SK-N-SH (cell line): ENCODE measurements at regions of chr10 and their contacts with region 1.

Region 1: GRCh38 chr10:50367732-50368131 is 116.4 kb upstream of the ASAH2 start:
- DNase-seq: peak; percentile 33
- H3K4me3 ChIP-seq: no peak overlapping the region
- H3K27ac ChIP-seq: no peak overlapping the region
- H3K4me1 ChIP-seq: no peaks in the 10 kb centered on the region
- H3K27me3 ChIP-seq: no peaks in the 10 kb centered on the region
- CTCF ChIP-seq: peak; percentile 57
- EP300 ChIP-seq: no peak
- RAD21 ChIP-seq: peak; percentile 66

Region 2: DNA sequence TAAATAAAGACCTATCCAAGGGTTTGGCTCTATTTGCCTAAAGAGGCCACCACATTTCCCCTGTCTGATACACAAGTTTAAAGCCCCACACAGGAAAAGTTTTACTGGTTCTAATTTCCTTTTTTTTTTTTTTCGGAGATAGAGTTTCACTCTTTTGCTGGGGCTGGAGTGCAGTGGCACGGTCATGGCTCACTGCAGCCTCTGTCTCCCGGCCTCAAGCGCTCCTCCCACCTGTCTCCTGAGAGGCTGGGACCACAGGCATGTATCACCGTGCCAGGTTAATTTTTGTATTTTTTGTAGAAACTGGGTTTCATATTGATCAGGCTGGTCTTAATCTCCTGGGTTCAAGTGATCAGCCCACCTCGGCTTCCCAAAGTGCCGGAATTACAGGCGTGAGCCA is 63.1 kb before region 1 on chr10:
- CTCF ChIA-PET with region 1: no interaction called
- POLR2A ChIA-PET with region 1: no interaction called
- DNase-seq: no peak
- H3K4me3 ChIP-seq: no peak overlapping the region
- H3K27ac ChIP-seq: no peak overlapping the region
- H3K4me1 ChIP-seq: no peaks in the 10 kb centered on the region
- H3K27me3 ChIP-seq: no peaks in the 10 kb centered on the region
- CTCF ChIP-seq: no peak
- EP300 ChIP-seq: no peak
- RAD21 ChIP-seq: no peak

Region 3: DNA sequence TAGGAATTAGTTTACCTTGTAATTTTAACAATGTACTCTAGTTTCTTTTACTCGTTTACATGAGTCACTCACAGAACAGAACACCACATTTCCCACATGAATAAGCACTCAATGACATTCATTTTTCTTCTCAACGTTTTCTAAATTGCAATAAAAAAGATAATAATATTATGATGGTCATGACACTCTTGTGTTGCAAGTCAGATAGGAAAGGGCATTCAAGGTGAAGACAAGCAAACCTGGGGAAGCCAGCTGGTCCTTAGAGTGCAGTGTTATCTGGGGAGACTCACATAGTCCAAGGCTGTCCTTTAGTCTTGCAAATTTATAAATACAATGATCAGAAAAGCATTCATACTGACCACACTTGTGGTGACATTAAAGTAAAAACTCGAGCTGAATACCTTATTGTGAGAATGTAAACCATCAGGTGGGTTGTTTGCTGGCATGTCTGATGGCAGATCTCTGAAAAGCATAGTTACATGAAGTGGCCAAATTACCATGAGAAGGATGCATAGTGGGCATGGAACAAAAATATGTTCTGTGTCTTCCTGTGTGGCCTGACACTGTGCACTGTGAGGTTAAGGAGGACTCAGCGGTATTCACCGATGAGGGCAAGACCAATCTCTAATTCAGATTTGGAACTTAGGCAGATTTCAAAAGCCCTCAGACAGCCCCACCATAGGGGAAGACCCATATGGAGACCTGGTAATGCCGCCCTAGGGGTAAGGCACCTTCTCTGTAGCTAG is 42.5 kb after region 1 on chr10:
- CTCF ChIA-PET with region 1: interaction called, 10 read pairs
- POLR2A ChIA-PET with region 1: no interaction called
- DNase-seq: no peak
- H3K4me3 ChIP-seq: no peak overlapping the region
- H3K27ac ChIP-seq: 0 out of 4 replicates have a peak overlapping the region, but pooled peaks of 1 of the 2 experiments have one; percentile 0
- H3K4me1 ChIP-seq: peaks cover 4 to 5% of the 10 kb centered on the region in 2 experiments; a peak in 1 of 4 replicates
- H3K27me3 ChIP-seq: no peaks in the 10 kb centered on the region
- CTCF ChIP-seq: no peak
- EP300 ChIP-seq: no peak
- RAD21 ChIP-seq: no peak

Region 4: DNA sequence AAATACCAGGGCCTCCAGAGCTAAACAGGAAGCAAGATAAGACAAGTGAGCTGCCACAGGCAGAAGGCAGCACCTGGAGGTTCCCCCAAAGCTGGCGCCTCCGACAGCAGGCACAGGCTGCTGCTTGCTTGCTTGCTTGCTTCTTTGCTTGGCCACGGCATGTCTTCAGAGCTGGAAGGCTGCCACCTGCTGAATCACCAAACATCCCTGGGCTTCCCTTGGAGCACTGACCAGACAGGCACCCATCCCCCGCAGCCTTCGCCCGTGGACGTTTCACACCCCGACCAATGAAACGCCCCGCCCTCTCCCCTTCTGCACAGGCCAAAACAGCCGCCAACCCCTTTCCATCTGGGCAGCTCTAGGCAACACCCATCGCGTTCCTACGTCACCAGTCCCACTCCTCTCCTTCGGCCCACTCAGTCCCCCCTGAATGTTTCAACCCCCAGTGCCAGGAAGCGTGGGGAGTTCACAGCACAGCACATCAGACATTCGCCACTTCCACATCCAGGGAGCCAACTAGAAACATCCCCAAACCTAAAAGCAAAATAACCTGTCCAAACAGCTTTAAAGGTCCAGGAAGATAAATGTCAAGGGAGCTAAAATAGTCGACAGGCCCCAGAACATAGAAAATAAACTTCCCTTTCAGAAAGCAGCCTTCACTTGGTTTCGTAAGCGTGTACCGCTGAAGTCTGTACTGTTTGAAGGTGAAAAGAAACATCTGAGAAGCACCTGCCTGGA is 254.4 kb after region 1 on chr10:
- CTCF ChIA-PET with region 1: interaction called, 14 read pairs
- POLR2A ChIA-PET with region 1: no interaction called
- DNase-seq: peak; percentile 69
- H3K4me3 ChIP-seq: peak overlapping the region; percentile 90 to 93
- H3K27ac ChIP-seq: peak overlapping the region; percentile 64 to 100
- H3K4me1 ChIP-seq: peaks cover 6 to 13% of the 10 kb centered on the region in 2 experiments; a peak in 3 of 4 replicates
- H3K27me3 ChIP-seq: no peaks in the 10 kb centered on the region
- CTCF ChIP-seq: no peak; the same call in 1 of the 2 replicates
- EP300 ChIP-seq: peak in 1 of 2 experiments; percentile 20; a peak in 1 of 4 replicates
- RAD21 ChIP-seq: peak; percentile 55